Activated CD8-positive, alpha-beta T cell treated with anti-CD3 and anti-CD28 coated beads, Interleukin-2, amount 10 ng/mL, durations not matched to agents 7 days and 5 days (primary cell): ENCODE measurements at regions of chr10 and their contacts with region 1.

Region 1: DNA sequence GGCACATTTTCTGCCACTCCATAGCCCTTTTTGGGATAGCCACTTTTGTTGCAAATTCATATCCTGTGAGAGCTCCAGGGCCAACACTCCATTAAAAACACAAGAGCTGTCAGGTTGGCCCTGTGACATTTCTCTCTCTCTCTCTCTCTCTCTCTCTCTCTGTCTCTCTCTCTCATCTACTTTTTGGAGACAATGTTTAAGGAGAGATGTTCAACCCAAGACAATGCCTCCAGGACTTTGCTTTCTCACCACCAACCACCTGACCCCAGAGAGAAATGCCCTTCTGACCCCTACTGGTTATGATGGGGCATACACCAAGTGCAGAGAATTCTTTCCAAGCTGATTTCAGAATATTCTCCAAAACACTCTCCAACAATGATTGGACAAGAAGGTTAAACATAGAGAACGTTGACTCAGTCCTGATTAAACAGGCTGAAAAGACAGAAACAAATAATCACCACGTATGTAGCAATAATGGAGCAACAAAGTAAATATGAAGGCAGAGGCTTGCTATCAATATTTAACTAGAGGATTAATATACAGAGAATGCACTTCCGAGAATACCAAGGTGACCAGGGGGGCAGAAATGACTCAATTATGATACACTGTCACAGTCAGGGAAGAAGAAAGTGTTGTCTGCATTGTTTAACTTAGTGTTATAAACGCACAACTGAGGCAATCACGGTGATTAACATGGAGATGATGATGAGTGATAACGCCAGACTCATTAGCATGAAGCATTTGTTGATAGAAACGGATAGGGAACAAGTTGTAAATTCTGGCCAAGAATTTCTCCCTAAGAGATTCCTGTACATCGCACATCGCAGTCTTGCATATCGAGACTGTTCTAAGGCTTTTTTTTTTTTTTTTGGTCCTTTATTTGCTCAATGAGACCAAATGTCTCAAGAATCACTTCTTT is 178.5 kb downstream of the NRP1 start:
- DNase-seq: peak; percentile 46
- ATAC-seq: peak; percentile 80
- H3K4me3 Mint-ChIP-seq: no peak overlapping the region
- H3K27ac Mint-ChIP-seq: no peak overlapping the region
- H3K4me1 Mint-ChIP-seq: peaks cover 20% of the 10 kb centered on the region
- H3K27me3 Mint-ChIP-seq: peaks cover 2% of the 10 kb centered on the region

Region 2: DNA sequence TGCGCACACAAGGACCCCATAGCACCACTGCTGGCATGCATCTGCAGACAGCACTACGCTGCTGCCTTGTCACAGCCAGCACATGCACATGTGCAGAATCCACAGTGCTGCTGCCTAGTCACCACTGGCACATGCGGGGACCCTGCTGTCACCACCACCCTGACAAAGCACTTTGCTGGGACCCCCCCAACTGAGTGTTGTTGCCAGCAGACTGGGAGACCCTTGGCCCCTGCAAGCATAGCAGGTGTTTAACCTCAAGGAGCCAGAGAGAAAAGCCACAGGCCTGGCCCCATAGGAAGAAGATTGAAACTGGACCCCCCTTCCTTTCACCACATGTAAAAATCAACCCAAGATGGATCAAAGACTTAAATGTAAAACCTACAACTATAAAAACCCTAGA is 409.1 kb before region 1 on chr10:
- CTCF ChIA-PET with region 1: no interaction called
- POLR2A ChIA-PET with region 1: no interaction called
- DNase-seq: no peak
- ATAC-seq: no peak
- H3K4me3 Mint-ChIP-seq: no peak overlapping the region
- H3K27ac Mint-ChIP-seq: no peak overlapping the region
- H3K4me1 Mint-ChIP-seq: no peaks in the 10 kb centered on the region
- H3K27me3 Mint-ChIP-seq: no peaks in the 10 kb centered on the region

Region 3: GRCh38 chr10:33115738-33116719 is 40.0 kb before region 1 on chr10:
- CTCF ChIA-PET with region 1: interaction called, 13 read pairs
- POLR2A ChIA-PET with region 1: no interaction called
- DNase-seq: peak; percentile 39
- ATAC-seq: no peak
- H3K4me3 Mint-ChIP-seq: no peak overlapping the region
- H3K27ac Mint-ChIP-seq: peak overlapping the region; percentile 26
- H3K4me1 Mint-ChIP-seq: peaks cover 44% of the 10 kb centered on the region
- H3K27me3 Mint-ChIP-seq: no peaks in the 10 kb centered on the region

Region 4: DNA sequence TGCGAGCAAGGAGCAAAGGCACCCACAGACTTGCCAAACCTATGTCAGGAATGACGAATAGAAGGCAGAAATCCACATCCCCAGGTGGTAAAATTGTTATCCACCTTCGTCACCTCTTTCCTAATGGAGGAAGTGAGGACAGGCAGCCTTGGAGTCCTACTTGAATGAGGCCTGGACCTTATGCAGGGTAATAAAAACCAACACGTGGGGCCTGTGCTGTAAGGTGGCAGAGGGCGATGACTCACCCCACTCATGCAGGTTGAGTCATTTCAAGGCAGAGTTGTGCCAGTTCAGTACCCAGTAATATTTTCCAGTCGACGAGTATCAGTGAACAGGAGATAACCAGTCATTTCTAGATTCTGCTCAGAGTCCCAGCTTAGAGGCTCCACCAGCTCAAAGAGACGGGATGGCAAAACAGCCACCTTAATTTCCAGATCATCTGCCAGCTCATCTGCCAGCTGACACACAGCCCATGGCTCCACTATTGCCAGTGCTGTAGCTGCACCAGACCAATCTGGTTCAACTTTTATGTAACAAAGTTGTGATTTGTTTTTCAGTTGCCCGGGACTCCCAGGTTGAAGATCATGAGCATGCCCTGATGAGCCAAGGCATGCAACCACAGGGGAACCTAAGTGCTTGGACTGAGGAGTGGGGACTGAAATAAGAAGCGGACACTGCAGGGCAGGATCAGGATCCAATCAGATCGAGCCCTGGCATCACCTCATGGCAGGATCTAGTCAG is 21.8 kb before region 1 on chr10:
- CTCF ChIA-PET with region 1: interaction called, 13 read pairs
- POLR2A ChIA-PET with region 1: interaction called, 10 read pairs
- DNase-seq: peak; percentile 67
- ATAC-seq: peak; percentile 80
- H3K4me3 Mint-ChIP-seq: no peak overlapping the region
- H3K27ac Mint-ChIP-seq: peak overlapping the region; percentile 77
- H3K4me1 Mint-ChIP-seq: peaks cover 63% of the 10 kb centered on the region
- H3K27me3 Mint-ChIP-seq: no peaks in the 10 kb centered on the region

Region 5: GRCh38 chr10:33139181-33139646 is 16.8 kb before region 1 on chr10:
- CTCF ChIA-PET with region 1: interaction called, 13 read pairs
- POLR2A ChIA-PET with region 1: interaction called, 10 read pairs
- DNase-seq: peak; percentile 85
- ATAC-seq: peak; percentile 83
- H3K4me3 Mint-ChIP-seq: peak overlapping the region; percentile 36
- H3K27ac Mint-ChIP-seq: peak overlapping the region; percentile 93
- H3K4me1 Mint-ChIP-seq: peaks cover 74% of the 10 kb centered on the region
- H3K27me3 Mint-ChIP-seq: no peaks in the 10 kb centered on the region